ENCODE measurements at regions of chr5 and their contacts with region 1.

Region 1: GRCh38 chr5:159819591-159820411 is 96.5 kb upstream of the ADRA1B start:
- DNase-seq: peak; percentile 27
- H3K4me3 ChIP-seq: no peak overlapping the region
- H3K27ac ChIP-seq: no peak overlapping the region
- H3K4me1 ChIP-seq: peaks cover 30% of the 10 kb centered on the region
- H3K27me3 ChIP-seq: no peaks in the 10 kb centered on the region
- CTCF ChIP-seq: no peak

Region 2: DNA sequence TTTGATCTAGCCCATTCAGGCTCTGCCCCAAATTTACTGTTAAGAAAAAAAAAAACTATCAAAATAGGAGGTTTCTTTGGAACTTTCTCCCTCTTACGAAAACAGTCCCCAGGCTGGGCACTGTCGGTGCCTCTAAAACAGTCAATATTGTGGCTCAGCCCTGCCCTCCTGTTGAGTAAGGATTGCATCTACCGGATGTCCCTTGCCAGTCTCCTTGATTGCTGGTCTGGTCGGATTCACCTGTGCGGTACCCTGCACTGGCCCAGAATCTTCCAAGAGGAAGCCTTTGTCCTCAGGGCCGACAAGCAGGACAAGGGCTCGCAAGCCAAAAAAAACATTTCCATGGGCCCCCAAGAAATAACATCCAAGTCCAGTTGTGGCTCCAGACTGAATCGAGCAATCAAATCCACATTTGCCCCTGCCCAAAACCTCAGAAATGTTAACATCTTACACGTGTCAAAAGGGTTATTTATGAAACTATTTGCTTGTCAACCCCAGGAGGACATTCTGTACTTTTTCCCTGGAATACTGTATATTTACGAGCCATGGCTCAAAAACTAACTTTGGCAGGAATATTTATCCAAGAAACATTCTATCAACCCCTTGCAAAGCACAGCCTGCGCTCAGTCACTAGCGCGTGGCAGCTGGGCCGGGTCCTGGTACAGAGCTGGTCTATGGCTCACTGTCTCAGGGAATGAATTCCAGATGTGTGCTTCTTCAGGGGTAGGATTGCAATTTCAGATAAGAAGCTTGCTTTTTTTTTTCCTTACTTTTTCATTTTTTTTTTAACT is 32.7 kb before region 1 on chr5:
- CTCF ChIA-PET with region 1: no interaction called
- dilution Hi-C with region 1: loop called (anchors 5 kb)
- in situ Hi-C with region 1: no loop called
- intact Hi-C with region 1: no loop called
- DNase-seq: no peak
- H3K4me3 ChIP-seq: no peak overlapping the region
- H3K27ac ChIP-seq: no peak overlapping the region
- H3K4me1 ChIP-seq: no peaks in the 10 kb centered on the region
- H3K27me3 ChIP-seq: no peaks in the 10 kb centered on the region
- CTCF ChIP-seq: no peak

Region 3: GRCh38 chr5:159899067-159900049 is 79.6 kb after region 1 on chr5:
- CTCF ChIA-PET with region 1: no interaction called
- dilution Hi-C with region 1: no loop called
- in situ Hi-C with region 1: no loop called
- intact Hi-C with region 1: no loop called
- DNase-seq: peak; percentile 66
- H3K4me3 ChIP-seq: no peak overlapping the region
- H3K27ac ChIP-seq: no peak overlapping the region
- H3K4me1 ChIP-seq: peaks cover 55% of the 10 kb centered on the region
- H3K27me3 ChIP-seq: no peaks in the 10 kb centered on the region
- CTCF ChIP-seq: no peak